ENCODE measurements at regions of chr4 and their contacts with region 1.

Region 1: DNA sequence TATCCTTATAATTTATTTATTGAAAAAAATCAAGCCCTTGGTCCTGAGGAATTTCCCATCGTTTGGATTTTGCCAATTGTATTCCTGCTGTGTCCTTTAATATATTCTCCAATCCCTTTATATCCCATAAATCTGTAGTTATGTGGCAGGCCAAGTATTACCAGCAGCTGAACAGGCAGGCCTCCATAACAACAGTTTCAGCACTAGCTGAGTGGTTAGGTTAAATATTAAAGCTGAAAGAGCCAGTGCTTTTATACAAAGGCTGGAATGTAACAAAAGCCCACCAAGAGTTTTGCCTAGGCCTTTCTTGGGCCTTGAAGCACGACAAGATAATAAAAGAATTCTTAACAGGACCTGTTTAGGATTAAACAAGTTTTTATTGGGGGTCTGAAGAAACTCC is 366.6 kb upstream of the GALNT7 start:
- DNase-seq: no peak
- ATAC-seq: no peak
- H3K4me3 ChIP-seq: no peak overlapping the region
- H3K27ac ChIP-seq: no peak overlapping the region
- H3K4me1 ChIP-seq: no peaks in the 10 kb centered on the region
- H3K27me3 ChIP-seq: no peaks in the 10 kb centered on the region
- CTCF ChIP-seq: no peak
- POLR2A ChIP-seq: no peak
- RAD21 ChIP-seq: no peak

Region 2: GRCh38 chr4:172369471-172369959 is 432.5 kb before region 1 on chr4:
- CTCF ChIA-PET with region 1: interaction called, 11 read pairs
- POLR2A ChIA-PET with region 1: no interaction called
- dilution Hi-C with region 1: no loop called
- in situ Hi-C with region 1: no loop called
- intact Hi-C with region 1: no loop called
- DNase-seq: no peak
- ATAC-seq: no peak
- H3K4me3 ChIP-seq: no peak overlapping the region
- H3K27ac ChIP-seq: no peak overlapping the region
- H3K4me1 ChIP-seq: no peaks in the 10 kb centered on the region
- H3K27me3 ChIP-seq: no peaks in the 10 kb centered on the region
- CTCF ChIP-seq: no peak
- POLR2A ChIP-seq: no peak
- RAD21 ChIP-seq: no peak

Region 3: GRCh38 chr4:172850838-172851237 is 48.8 kb after region 1 on chr4:
- CTCF ChIA-PET with region 1: no interaction called
- POLR2A ChIA-PET with region 1: no interaction called
- dilution Hi-C with region 1: no loop called
- in situ Hi-C with region 1: no loop called
- intact Hi-C with region 1: no loop called
- DNase-seq: peak; percentile 95
- ATAC-seq: peak; percentile 79
- H3K4me3 ChIP-seq: no peak overlapping the region
- H3K27ac ChIP-seq: no peak overlapping the region
- H3K4me1 ChIP-seq: no peaks in the 10 kb centered on the region; the same call in 1 of the 2 replicates
- H3K27me3 ChIP-seq: no peaks in the 10 kb centered on the region
- CTCF ChIP-seq: no peak
- POLR2A ChIP-seq: no peak
- RAD21 ChIP-seq: no peak

Region 4: DNA sequence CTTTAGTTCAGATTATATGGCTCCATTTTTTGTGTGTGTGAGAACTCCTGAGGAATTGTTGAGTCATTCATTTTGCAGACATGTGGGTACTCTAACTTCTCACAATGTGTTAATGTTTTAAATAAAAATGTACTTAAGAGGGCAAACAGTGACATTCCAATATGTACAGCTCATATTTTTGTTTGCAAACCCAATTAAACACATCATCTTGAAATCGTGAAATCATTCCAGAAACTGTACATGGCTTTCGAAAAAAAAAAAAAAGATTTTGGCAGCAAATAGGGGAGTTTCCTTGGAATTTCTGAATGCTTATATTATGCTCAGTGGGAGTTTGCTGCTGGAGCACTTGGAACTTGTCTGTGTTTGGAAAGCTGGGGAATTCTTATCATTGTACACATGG is 1635.3 kb after region 1 on chr4:
- CTCF ChIA-PET with region 1: no interaction called
- POLR2A ChIA-PET with region 1: no interaction called
- dilution Hi-C with region 1: no loop called
- in situ Hi-C with region 1: no loop called
- intact Hi-C with region 1: no loop called
- DNase-seq: peak; percentile 36
- ATAC-seq: no peak; the same call in 1 of the 2 replicates
- H3K4me3 ChIP-seq: no peak overlapping the region
- H3K27ac ChIP-seq: no peak overlapping the region
- H3K4me1 ChIP-seq: no peaks in the 10 kb centered on the region
- H3K27me3 ChIP-seq: no peaks in the 10 kb centered on the region
- CTCF ChIP-seq: no peak
- POLR2A ChIP-seq: no peak
- RAD21 ChIP-seq: no peak

Measured in IMR-90 (cell line).